IMR-90 (cell line): ENCODE measurements at regions of chr9 and their contacts with region 1.

Region 1: GRCh38 chr9:35646533-35647265 is 4.0 kb downstream of the SIT1 start:
- DNase-seq: peak; percentile 82
- ATAC-seq: peak; percentile 99
- H3K4me3 ChIP-seq: peak overlapping the region; percentile 54
- H3K27ac ChIP-seq: peak overlapping the region; percentile 61
- H3K4me1 ChIP-seq: peaks cover 8% of the 10 kb centered on the region
- H3K27me3 ChIP-seq: no peaks in the 10 kb centered on the region
- CTCF ChIP-seq: peak; percentile 98
- POLR2A ChIP-seq: peak; percentile 48; the same call in 1 of the 2 replicates
- RAD21 ChIP-seq: peak; percentile 83

Region 2: DNA sequence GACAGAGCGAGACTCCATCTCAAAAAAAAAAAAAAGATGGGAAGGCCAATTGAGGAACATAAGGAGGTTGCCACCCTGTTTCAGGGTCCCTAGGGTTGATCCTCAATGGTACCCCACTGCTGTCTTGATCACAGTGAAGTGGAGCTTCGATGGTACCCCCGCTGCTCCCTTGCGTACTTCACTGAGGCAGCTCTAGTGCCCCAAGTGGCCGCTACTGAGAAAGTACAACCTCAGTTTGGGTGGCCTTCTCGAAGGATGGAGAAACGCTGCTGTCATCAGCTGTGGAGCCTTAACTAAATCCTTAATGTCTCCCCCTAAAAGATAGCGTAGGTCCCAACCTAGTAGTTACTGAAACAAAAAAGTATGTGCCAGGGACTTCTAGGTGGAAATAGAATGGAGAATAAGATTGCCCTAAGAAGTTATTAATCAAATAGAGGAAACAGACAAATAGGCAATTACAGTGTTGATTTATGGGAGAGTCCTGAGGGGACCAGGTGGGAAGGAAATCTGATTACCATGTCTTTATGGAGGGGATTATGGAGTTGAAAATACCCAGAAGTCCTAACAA is 35.4 kb before region 1 on chr9:
- CTCF ChIA-PET with region 1: interaction called, 13 read pairs
- POLR2A ChIA-PET with region 1: no interaction called
- dilution Hi-C with region 1: no loop called
- in situ Hi-C with region 1: no loop called
- intact Hi-C with region 1: no loop called
- DNase-seq: peak; percentile 35
- ATAC-seq: peak; percentile 90
- H3K4me3 ChIP-seq: no peak overlapping the region
- H3K27ac ChIP-seq: no peak overlapping the region
- H3K4me1 ChIP-seq: no peaks in the 10 kb centered on the region
- H3K27me3 ChIP-seq: peaks cover 27% of the 10 kb centered on the region
- CTCF ChIP-seq: peak; percentile 56
- POLR2A ChIP-seq: no peak
- RAD21 ChIP-seq: no peak